Gastrocnemius medialis (tissue), 4 donors: ENCODE measurements at regions of chr20 and their contacts with region 1.

Region 1: DNA sequence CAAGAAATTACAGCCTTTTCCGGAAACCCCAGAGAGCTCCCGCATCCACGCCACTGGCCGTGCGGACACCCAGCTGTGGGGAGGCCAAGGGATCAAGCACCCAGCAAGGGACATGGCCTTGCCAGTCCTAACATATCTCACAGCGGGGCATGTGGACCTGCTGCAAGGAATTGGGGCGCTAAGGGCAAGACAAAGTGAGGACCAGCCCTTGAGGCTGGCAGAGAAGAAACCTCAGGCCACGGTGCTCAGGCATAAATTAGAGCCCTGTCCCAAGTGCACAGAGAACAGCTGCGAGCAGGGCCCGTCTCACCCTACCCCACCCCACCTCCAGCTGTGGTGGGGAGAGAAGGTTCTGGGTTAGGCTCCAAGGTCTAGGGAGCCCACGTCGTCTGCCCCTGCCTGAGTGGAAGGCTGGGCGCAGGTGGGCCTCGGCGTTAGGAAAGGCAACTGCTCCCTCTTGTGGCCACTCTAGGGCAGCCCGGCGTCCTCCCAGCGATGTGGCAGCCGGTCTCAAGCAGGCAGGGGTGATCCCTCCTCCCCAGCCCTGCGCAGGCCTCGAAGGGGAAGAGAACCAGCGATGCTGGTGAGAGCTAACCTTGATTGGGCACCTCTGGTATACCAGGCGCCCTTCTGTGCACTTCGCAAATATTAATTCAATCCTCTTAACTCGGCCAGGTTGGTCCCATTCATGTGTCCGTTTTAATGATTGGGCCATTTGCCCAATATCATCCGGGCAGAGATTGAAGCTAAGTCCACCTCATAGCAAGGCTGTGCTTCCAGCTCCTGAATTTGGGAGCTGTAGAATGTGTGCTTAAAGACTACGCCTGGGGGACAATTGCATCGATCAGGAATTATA is 235.8 kb downstream of the NFATC2 start:
- DNase-seq: peak; percentile 35 to 42
- ATAC-seq: peak; percentile 74 to 81
- H3K4me3 ChIP-seq: no peak overlapping the region
- H3K27ac ChIP-seq: no peak overlapping the region
- H3K4me1 ChIP-seq: no peaks in the 10 kb centered on the region
- H3K27me3 ChIP-seq: no peaks in the 10 kb centered on the region
- CTCF ChIP-seq: peak; percentile 45 to 90 (median 81)
- POLR2A ChIP-seq: no peak

Region 2: DNA sequence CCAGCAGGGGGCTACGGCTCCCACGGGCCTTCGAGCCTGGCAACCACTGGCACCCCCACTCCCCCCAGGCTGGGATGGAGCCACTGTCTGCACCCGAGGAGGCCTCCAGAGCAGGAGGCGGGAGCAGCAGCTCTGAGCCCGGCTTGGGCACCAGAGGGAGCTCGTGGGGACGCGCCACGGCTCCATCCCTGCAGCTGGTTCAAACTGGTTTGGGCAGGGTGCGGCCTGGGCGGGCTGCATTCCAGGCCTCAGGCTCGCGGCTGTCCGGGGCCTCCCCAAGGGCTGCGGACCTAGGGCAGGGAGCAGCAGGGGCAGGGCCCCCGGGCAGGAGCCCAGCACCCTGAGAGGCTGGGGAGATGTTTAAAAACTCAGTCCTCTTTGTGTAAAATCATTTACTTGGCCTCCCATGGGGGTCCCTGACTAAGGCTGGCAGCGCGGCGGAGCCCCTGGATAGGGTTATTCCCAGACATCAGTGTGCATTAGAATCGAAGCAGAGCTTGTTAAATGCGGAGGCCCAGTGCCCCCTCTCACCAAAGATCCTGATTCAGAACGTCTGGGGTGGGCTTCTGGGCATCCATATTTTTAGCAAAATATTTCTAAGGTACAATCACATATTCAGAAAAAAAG is 516.0 kb before region 1 on chr20:
- in situ Hi-C with region 1: loop called in 3 of 4 experiments (anchors 25 kb)
- intact Hi-C with region 1: loop called (anchors 5 kb)
- DNase-seq: peak; percentile 40 to 57
- ATAC-seq: peak in 1 of 2 donors; percentile 45
- H3K4me3 ChIP-seq: peak overlapping the region; percentile 7 to 34 (median 24)
- H3K27ac ChIP-seq: peak overlapping the region; percentile 27 to 60 (median 50)
- H3K4me1 ChIP-seq: peaks cover 10 to 17% of the 10 kb centered on the region in 2 donors
- H3K27me3 ChIP-seq: no peaks in the 10 kb centered on the region
- CTCF ChIP-seq: peak; percentile 9 to 64 (median 49)
- POLR2A ChIP-seq: no peak

Region 3: GRCh38 chr20:50987592-50988210 is 319.0 kb before region 1 on chr20:
- in situ Hi-C with region 1: loop called (anchors 5 kb)
- intact Hi-C with region 1: loop called (anchors 1 kb)
- DNase-seq: peak; percentile 48
- ATAC-seq: peak; percentile 98 to 99
- H3K4me3 ChIP-seq: no peak overlapping the region
- H3K27ac ChIP-seq: no peak overlapping the region
- H3K4me1 ChIP-seq: peaks cover 0 to 3% of the 10 kb centered on the region in 2 donors
- H3K27me3 ChIP-seq: peaks cover 15 to 24% (median 21%) of the 10 kb centered on the region in 3 donors
- CTCF ChIP-seq: peak; percentile 74 to 88 (median 84)
- POLR2A ChIP-seq: no peak

Region 4: GRCh38 chr20:50992733-50993457 is 313.8 kb before region 1 on chr20:
- in situ Hi-C with region 1: loop called (anchors 5 kb)
- intact Hi-C with region 1: no loop called
- DNase-seq: no peak
- ATAC-seq: no peak
- H3K4me3 ChIP-seq: no peak overlapping the region
- H3K27ac ChIP-seq: no peak overlapping the region
- H3K4me1 ChIP-seq: no peaks in the 10 kb centered on the region
- H3K27me3 ChIP-seq: peaks cover 0 to 3% (median 0%) of the 10 kb centered on the region in 3 donors
- CTCF ChIP-seq: peak in 2 of 5 experiments; percentile 16 to 19
- POLR2A ChIP-seq: no peak

Region 5: GRCh38 chr20:51220293-51220706 is 86.4 kb before region 1 on chr20:
- in situ Hi-C with region 1: loop called in 1 of 4 experiments (anchors 10 kb)
- intact Hi-C with region 1: no loop called
- DNase-seq: no peak
- ATAC-seq: no peak
- H3K4me3 ChIP-seq: no peak overlapping the region
- H3K27ac ChIP-seq: no peak overlapping the region
- H3K4me1 ChIP-seq: no peaks in the 10 kb centered on the region
- H3K27me3 ChIP-seq: peaks cover 0 to 24% (median 17%) of the 10 kb centered on the region in 3 donors
- CTCF ChIP-seq: peak; percentile 14 to 66 (median 46)
- POLR2A ChIP-seq: no peak

Region 6: DNA sequence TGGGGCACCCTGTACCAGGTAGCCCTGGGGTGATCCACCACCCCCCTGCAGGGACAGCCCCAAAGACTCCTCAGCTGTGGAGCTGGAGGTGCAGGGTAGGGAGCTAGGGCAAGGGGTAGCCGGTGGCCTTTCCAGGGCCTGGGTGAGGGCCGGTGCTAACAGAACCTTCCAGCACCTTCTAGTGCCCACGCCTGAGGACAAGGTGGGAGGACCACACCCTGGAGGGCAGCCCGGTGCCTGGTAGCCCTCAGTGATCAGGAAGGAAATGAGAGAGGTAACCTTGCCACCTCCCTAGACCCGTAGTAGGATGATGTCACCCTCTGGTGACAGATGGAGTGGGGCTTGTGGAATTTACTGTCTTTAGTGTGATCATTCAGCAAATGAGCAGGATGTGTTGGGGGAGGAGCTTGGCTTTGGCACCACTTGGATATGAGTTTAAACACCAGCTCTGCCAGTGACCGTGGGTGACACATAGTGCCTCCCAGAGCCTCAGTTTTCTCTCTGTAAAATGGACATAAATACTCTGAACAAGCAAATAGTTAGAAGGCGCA is 48.1 kb after region 1 on chr20:
- in situ Hi-C with region 1: no loop called
- intact Hi-C with region 1: no loop called
- DNase-seq: no peak
- ATAC-seq: no peak
- H3K4me3 ChIP-seq: no peak overlapping the region
- H3K27ac ChIP-seq: no peak overlapping the region
- H3K4me1 ChIP-seq: no peaks in the 10 kb centered on the region
- H3K27me3 ChIP-seq: no peaks in the 10 kb centered on the region
- CTCF ChIP-seq: no peak
- POLR2A ChIP-seq: no peak

Region 7: DNA sequence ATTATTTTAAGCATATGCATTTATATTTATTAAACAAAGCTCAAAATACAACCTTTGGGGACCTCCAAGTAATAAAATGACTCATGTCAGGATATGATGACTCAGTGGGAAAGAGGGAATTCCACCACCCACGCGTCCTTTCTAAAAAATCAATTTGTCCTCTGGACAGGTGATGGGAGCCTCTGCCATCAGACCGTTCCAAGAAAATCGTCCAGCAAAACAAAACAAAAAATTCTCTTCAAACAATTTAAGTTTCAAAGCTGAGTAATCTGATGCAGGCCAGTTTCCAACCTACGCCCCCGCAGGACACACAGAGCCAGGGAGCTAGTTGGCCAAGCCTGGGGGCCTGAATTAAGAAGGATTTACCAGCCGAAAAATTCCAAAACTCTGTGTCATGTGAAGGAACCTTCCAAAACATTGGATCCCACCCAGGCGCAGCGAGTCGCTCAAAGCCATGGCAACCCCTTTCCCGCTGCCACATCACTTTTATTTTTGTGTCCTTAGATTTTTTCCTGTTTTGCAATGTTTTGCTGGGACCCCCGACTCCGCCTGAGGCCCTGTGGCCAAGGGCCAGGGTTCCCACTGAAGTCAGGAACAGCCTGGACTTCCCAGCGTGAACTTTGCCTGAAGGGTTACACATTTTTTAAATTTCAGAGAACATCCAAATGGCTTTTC is 140.5 kb after region 1 on chr20:
- in situ Hi-C with region 1: no loop called
- intact Hi-C with region 1: no loop called
- DNase-seq: peak; percentile 31 to 66
- ATAC-seq: peak; percentile 6 to 27
- H3K4me3 ChIP-seq: no peak overlapping the region
- H3K27ac ChIP-seq: peak overlapping the region; percentile 48 to 87 (median 78)
- H3K4me1 ChIP-seq: peaks cover 37 to 38% of the 10 kb centered on the region in 2 donors
- H3K27me3 ChIP-seq: no peaks in the 10 kb centered on the region
- CTCF ChIP-seq: no peak
- POLR2A ChIP-seq: no peak

Region 8: GRCh38 chr20:52012079-52012478 is 705.3 kb after region 1 on chr20:
- in situ Hi-C with region 1: no loop called
- intact Hi-C with region 1: no loop called
- DNase-seq: no peak
- ATAC-seq: no peak
- H3K4me3 ChIP-seq: no peak overlapping the region
- H3K27ac ChIP-seq: no peak overlapping the region
- H3K4me1 ChIP-seq: no peaks in the 10 kb centered on the region
- H3K27me3 ChIP-seq: no peaks in the 10 kb centered on the region
- CTCF ChIP-seq: no peak
- POLR2A ChIP-seq: no peak